ENCODE measurements at regions of chr1 and their contacts with region 1.

Region 1: DNA sequence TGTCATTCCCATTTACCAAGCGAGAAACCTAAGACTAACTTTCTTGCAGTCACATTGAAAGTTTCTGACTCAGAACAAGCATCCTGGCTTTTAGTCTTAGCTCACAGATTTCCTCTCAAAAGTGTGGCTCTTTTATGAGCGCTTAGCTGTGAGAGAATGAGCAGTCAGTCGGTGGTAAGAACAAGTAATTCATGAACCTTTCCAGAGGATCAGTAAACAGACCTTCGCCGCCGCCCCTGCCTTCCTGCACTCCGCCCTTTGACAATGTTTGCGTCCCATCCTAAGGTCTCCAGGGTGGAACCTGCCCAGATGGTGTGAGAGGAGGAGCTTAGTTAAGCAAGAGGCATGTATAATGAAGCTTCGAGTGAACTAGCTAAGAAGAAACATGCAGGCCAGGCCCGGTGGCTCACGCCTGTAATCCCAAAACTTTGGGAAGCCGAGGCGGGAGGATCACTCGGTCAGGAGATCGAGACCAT is 142.4 kb downstream of the GLUL start:
- DNase-seq: peak; percentile 76
- ATAC-seq: peak; percentile 93
- H3K4me3 Mint-ChIP-seq: no peak overlapping the region
- H3K27ac Mint-ChIP-seq: peak overlapping the region; percentile 59
- H3K4me1 Mint-ChIP-seq: peaks cover 22% of the 10 kb centered on the region
- H3K27me3 Mint-ChIP-seq: peaks cover 2% of the 10 kb centered on the region

Region 2: DNA sequence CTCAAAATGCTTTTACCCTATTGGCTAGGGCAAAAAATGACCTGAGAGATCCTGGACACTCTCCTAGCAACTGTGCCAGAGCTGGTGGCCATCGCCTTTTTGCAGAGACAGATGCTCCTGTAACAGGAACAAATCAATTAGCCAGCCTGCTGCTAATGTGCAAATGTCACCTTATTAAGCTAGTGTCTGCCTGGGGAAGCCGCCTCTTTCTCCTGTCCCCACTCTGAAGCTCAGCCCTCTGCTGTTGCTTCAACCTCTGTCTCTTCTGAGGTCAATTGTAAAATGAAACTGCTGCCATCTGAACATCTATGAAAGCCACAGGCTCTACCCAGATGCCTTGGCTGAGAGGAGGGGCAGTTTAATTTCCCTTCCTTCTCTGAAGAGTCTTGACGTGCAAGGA is 851.4 kb before region 1 on chr1:
- CTCF ChIA-PET with region 1: no interaction called
- POLR2A ChIA-PET with region 1: no interaction called
- intact Hi-C with region 1: loop called in 1 of 2 experiments (anchors 10 kb)
- DNase-seq: peak; percentile 17
- ATAC-seq: peak; percentile 27
- H3K4me3 Mint-ChIP-seq: no peak overlapping the region
- H3K27ac Mint-ChIP-seq: peak overlapping the region; percentile 76
- H3K4me1 Mint-ChIP-seq: peaks cover 31% of the 10 kb centered on the region
- H3K27me3 Mint-ChIP-seq: no peaks in the 10 kb centered on the region

Region 3: DNA sequence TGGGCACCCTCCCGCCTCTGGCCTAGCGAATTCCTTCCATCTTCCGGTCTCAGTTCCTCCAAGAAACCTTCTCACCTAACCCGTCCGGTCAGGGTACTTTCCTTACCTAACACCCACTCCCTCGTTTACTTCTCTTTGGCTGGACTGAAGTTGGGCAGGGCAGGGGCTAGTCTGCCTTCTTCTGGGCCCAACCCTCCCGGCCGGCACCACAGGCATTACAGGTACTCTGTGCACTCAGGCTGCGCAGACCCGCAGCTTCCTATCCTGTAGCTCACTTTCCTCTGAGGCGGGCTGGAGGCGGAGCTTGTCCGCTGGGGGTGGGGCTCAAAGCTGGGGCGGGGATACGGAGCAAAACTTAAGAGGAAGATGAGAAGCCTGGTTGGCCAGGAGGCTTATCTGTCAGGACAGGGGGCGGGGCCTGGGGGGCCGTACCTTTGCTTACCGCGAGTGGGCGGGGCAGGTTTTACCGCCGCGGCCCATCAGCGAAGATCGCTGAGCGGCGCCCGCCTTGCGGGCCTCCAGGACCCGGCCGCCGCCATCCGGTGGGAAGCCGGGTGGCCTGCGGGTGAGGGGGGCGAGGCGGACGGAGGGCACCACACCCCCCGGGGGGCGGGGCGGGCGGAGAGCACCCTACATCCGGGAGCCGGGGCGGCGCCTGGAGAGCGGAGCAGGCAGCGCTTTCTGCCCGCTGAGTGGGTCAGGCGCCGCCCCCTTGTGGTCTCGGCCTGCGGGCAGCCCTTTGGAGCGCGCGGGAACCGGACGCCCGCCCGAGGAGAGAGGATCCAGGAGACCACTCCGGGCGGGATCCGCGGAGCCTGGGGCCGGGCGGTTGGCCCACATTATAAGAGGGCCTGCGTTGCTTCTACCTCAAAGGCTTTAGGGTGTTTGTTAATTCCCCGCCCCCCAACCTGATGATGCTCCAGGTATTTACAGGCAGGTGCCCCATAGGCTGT is 219.6 kb before region 1 on chr1:
- CTCF ChIA-PET with region 1: no interaction called
- POLR2A ChIA-PET with region 1: no interaction called
- intact Hi-C with region 1: loop called in 1 of 2 experiments (anchors 5 kb)
- DNase-seq: peak; percentile 99
- ATAC-seq: peak; percentile 96
- H3K4me3 Mint-ChIP-seq: peak overlapping the region; percentile 86
- H3K27ac Mint-ChIP-seq: peak overlapping the region; percentile 97
- H3K4me1 Mint-ChIP-seq: peaks cover 11% of the 10 kb centered on the region
- H3K27me3 Mint-ChIP-seq: no peaks in the 10 kb centered on the region

Region 4: GRCh38 chr1:182143154-182143657 is 106.0 kb before region 1 on chr1:
- CTCF ChIA-PET with region 1: interaction called, 4 read pairs
- POLR2A ChIA-PET with region 1: no interaction called
- intact Hi-C with region 1: loop called in 1 of 2 experiments (anchors 2 kb)
- DNase-seq: peak; percentile 94
- ATAC-seq: peak; percentile 78
- H3K4me3 Mint-ChIP-seq: no peak overlapping the region
- H3K27ac Mint-ChIP-seq: no peak overlapping the region
- H3K4me1 Mint-ChIP-seq: no peaks in the 10 kb centered on the region
- H3K27me3 Mint-ChIP-seq: peaks cover 4% of the 10 kb centered on the region

Region 5: GRCh38 chr1:182259229-182259872 is 10.1 kb after region 1 on chr1:
- CTCF ChIA-PET with region 1: interaction called, 5 read pairs
- POLR2A ChIA-PET with region 1: no interaction called
- intact Hi-C with region 1: loop called (anchors 1 kb)
- DNase-seq: peak; percentile 78
- ATAC-seq: peak; percentile 85
- H3K4me3 Mint-ChIP-seq: no peak overlapping the region
- H3K27ac Mint-ChIP-seq: peak overlapping the region; percentile 85
- H3K4me1 Mint-ChIP-seq: peaks cover 25% of the 10 kb centered on the region
- H3K27me3 Mint-ChIP-seq: no peaks in the 10 kb centered on the region

Region 6: DNA sequence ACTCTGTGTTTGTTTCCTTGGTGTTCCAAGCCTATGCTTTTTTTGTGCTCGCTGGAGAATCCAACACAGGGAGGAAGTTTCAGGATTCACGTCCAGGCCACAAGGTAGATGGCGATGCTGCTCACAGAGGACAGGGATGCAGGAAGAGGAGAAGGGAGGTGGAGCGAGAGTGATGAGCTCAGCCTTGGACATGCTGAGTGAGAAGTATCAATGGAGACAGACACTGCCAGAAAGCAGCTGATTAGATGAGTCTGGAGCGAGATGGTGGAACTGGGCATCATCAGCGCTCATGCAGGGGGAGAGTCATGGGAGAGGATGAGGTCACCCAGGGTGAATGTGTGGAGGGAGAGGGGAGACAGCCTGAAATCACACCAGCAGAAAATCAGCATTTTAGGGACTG is 32.3 kb after region 1 on chr1:
- CTCF ChIA-PET with region 1: no interaction called
- POLR2A ChIA-PET with region 1: no interaction called
- intact Hi-C with region 1: no loop called
- DNase-seq: no peak
- ATAC-seq: no peak
- H3K4me3 Mint-ChIP-seq: no peak overlapping the region
- H3K27ac Mint-ChIP-seq: no peak overlapping the region
- H3K4me1 Mint-ChIP-seq: peaks cover 9% of the 10 kb centered on the region
- H3K27me3 Mint-ChIP-seq: no peaks in the 10 kb centered on the region

Region 7: DNA sequence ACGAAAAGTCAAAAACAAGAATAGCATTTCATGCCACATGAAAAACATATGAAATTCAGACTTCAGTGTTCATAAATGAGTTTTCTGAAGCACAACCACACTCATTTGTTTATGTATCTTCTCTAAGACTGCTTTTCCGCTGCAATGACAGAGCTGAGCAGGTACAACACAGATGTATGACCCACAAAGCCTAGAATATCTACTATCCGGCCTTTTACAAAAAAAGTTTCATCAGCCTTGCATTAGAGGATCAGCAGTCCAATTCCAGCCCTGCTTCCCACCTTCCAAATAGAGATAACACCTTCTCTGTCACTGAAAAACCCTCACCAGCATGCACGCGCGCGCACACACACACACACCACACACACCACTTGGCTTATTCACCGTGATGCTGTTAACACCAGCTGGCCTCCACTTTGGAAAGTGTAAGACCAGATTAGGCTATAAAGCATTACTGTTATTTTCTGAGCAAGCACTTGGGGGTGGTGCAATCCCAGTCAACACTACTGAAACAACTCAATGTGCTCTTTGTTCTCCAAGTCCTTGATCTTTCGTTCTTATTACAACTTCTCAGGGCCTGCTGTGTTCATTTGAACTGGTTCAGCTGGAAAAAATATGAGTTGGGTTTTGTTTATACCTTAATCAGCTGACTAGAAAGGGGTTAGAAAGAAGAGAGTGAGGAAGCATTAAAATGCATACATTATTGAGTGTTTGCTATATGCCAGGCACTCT is 52.4 kb after region 1 on chr1:
- CTCF ChIA-PET with region 1: no interaction called
- POLR2A ChIA-PET with region 1: interaction called, 4 read pairs
- intact Hi-C with region 1: loop called (anchors 1 kb)
- DNase-seq: peak; percentile 65
- ATAC-seq: peak; percentile 79
- H3K4me3 Mint-ChIP-seq: no peak overlapping the region
- H3K27ac Mint-ChIP-seq: peak overlapping the region; percentile 71
- H3K4me1 Mint-ChIP-seq: peaks cover 30% of the 10 kb centered on the region
- H3K27me3 Mint-ChIP-seq: no peaks in the 10 kb centered on the region

Region 8: GRCh38 chr1:182391362-182392044 is 142.3 kb after region 1 on chr1 and contains the start of gene GLUL:
- CTCF ChIA-PET with region 1: interaction called, 5 read pairs
- POLR2A ChIA-PET with region 1: interaction called, 5 read pairs
- intact Hi-C with region 1: loop called (anchors 1 to 5 kb)
- DNase-seq: peak; percentile 81
- ATAC-seq: peak; percentile 89
- H3K4me3 Mint-ChIP-seq: peak within 1 kb of the TSS; percentile 86
- H3K27ac Mint-ChIP-seq: peak within 1 kb of the TSS; percentile 80
- H3K4me1 Mint-ChIP-seq: peaks cover 20% of the 10 kb centered on the region
- H3K27me3 Mint-ChIP-seq: peaks cover 13% of the 10 kb centered on the region
- total RNA-seq, gene GLUL: 63.5 to 87.5 TPM

Measured in activated CD4-positive, alpha-beta T cell treated with anti-CD3 and anti-CD28 coated beads for 36 hours (primary cell).